ENCODE measurements at regions of chr15 and their contacts with region 1.

Region 1: DNA sequence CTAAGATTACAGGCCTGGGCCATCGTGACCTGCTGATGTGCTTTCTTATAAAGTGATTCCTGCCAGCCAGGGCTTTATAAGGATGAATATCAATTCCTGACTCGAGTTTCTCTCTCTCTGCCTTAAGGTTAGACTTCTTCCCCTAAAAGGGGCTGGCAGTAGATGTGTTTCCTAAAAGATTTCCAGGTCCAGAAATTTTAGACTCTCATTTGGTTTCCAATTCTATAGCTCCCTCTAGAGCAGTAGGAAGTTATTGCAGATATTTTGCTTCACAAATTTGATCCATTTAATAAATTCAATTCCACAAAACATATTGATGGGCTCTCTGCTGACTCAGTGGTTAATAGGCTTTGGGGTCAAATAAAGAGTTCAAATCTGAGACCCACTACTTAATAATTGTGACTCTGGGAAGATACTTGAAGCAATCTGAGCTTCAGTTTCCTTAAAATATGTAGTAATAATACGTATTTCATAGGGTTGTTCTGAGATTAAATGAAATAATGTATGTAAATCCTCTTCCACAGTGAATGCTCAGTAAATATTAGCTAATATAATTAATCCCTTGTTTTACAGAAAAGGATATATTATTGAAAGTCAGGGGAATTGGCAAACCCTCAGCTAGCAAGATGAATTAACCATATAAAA is 2.1 kb downstream of the TRIM69 start:
- DNase-seq: peak; percentile 85
- H3K4me3 ChIP-seq: no peak overlapping the region
- H3K27ac ChIP-seq: no peak overlapping the region
- H3K4me1 ChIP-seq: peaks cover 30% of the 10 kb centered on the region
- H3K27me3 ChIP-seq: no peaks in the 10 kb centered on the region
- CTCF ChIP-seq: peak; percentile 81

Region 2: DNA sequence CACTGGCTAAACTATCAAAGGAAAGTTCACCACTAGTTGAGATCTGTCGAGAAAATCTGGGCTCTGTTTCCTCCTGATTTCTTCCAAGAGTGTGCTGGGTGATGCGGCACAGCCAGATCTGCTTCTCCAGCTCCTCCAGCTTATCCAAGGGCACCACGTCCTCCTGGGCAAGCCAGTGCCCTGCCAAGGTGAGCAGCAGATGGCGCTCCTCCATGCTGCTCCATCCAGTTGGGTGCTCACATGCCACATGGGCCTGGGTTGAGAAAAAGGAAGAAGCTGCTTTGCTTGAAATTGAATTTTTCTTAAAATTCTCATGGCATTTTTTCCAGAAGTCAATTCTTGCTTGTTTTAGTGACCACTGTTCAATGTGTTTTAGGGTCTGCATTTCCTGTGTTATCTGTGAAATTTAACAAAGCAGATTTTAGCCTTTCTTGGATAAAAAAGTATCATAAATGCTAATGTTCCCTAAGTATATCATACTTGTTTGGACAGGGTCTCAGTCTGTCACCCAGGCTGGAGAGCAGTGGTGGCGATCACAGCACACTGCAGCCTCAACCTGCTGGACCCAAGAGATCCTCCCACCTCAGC is 154.2 kb before region 1 on chr15:
- CTCF ChIA-PET with region 1: interaction called, 16 read pairs
- POLR2A ChIA-PET with region 1: interaction called, 8 read pairs
- intact Hi-C with region 1: loop called (anchors 2 kb)
- DNase-seq: peak; percentile 79
- H3K4me3 ChIP-seq: no peak overlapping the region
- H3K27ac ChIP-seq: no peak overlapping the region
- H3K4me1 ChIP-seq: no peaks in the 10 kb centered on the region
- H3K27me3 ChIP-seq: no peaks in the 10 kb centered on the region
- CTCF ChIP-seq: peak; percentile 81

Region 3: GRCh38 chr15:44663409-44664308 is 74.8 kb before region 1 on chr15 and contains the start of gene SPG11:
- CTCF ChIA-PET with region 1: interaction called, 17 read pairs
- POLR2A ChIA-PET with region 1: interaction called, 9 read pairs
- intact Hi-C with region 1: loop called (anchors 1 kb)
- DNase-seq: peak; percentile 98
- H3K4me3 ChIP-seq: peak within 1 kb of the TSS; percentile 71
- H3K27ac ChIP-seq: peak within 1 kb of the TSS; percentile 90
- H3K4me1 ChIP-seq: peaks cover 11% of the 10 kb centered on the region
- H3K27me3 ChIP-seq: no peaks in the 10 kb centered on the region
- CTCF ChIP-seq: peak; percentile 91
- total RNA-seq, gene SPG11: 55.4 and 68.5 TPM in 2 replicates

Region 4: DNA sequence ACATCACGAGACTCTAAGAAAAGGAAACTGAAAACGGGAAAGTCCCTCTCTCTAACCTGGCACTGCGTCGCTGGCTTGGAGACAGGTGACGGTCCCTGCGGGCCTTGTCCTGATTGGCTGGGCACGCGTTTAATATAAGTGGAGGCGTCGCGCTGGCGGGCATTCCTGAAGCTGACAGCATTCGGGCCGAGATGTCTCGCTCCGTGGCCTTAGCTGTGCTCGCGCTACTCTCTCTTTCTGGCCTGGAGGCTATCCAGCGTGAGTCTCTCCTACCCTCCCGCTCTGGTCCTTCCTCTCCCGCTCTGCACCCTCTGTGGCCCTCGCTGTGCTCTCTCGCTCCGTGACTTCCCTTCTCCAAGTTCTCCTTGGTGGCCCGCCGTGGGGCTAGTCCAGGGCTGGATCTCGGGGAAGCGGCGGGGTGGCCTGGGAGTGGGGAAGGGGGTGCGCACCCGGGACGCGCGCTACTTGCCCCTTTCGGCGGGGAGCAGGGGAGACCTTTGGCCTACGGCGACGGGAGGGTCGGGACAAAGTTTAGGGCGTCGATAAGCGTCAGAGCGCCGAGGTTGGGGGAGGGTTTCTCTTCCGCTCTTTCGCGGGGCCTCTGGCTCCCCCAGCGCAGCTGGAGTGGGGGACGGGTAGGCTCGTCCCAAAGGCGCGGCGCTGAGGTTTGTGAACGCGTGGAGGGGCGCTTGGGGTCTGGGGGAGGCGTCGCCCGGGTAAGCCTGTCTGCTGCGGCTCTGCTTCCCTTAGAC is 26.9 kb before region 1 on chr15 and contains the start of gene B2M:
- CTCF ChIA-PET with region 1: interaction called, 11 read pairs
- POLR2A ChIA-PET with region 1: interaction called, 4 read pairs
- intact Hi-C with region 1: no loop called
- DNase-seq: peak; percentile 98
- H3K4me3 ChIP-seq: peak within 1 kb of the TSS; percentile 88
- H3K27ac ChIP-seq: peak within 1 kb of the TSS; percentile 94
- H3K4me1 ChIP-seq: peaks cover 30% of the 10 kb centered on the region
- H3K27me3 ChIP-seq: no peaks in the 10 kb centered on the region
- CTCF ChIP-seq: no peak
- total RNA-seq, gene B2M: 1,596 and 1,873 TPM in 2 replicates

Region 5: DNA sequence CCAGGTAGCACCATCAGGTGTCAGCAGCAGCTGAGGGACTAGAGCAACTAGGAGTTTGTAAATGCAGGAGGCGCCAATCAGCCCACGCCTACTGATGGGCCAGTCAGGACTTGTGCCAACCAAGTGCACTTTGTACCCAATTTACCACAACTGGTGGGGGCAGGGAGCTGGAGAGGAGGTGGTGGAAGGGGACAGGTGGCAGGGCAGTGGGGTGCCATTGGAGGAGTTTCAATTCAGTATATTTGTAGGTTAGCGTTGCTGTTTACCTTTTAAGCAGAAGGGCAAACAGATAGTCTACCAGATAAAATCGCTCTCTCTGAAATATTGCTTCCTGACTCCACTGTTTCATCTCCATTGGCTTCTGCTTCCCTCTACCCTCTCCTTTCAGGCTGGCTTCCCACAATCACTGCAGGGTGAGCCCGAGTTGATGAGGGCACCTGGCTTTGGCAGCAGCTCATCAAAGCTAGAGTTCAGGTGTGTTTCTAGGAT is 73.6 kb after region 1 on chr15:
- CTCF ChIA-PET with region 1: no interaction called
- POLR2A ChIA-PET with region 1: no interaction called
- intact Hi-C with region 1: loop called (anchors 2 kb)
- DNase-seq: no peak
- H3K4me3 ChIP-seq: no peak overlapping the region
- H3K27ac ChIP-seq: no peak overlapping the region
- H3K4me1 ChIP-seq: no peaks in the 10 kb centered on the region
- H3K27me3 ChIP-seq: no peaks in the 10 kb centered on the region
- CTCF ChIP-seq: no peak

Measured in A673 (cell line).